ENCODE measurements at regions of chr3 and their contacts with region 1.

Region 1: DNA sequence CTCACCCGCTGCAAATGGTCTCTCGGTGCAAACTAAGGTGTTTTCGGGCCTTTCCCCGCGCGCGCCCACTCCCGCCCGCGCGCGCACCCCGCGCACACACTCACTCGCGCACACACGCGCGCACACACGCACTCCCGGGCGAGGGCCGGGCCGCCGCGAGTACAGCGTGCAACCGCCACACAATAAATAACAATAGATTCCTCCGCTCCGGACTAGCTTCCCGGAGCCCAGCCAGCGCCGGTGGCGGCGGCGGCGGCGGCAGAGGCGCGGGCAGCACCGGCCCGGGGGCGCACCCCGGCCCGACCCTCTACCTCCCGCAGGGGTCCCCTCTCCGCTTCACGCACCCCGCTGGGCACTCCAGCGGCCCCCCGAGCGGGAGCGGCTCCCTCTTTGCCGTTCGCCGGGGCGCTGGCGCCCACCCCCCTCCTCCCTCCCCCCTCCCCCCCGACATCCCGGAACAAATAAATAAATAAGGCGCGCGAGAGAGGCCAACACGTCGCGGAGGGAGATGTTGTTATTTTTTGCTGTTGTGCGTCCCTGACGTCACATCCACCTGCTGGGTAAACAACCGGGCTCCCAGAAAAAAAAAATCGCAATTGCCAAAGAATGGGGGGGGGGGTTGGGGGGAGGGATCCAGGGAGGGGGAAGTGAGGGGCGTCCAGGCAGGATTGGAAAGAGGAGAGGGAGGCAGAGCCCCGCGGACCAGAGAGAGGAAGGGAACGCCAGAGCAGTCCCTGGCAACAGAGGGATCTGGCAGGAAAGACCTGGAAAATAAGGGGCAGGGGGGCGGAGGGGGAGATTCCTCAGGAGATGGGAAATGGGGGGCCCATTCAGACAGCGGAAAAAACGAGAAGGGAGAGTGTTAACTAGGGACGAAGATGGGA is at the start of gene FOXP1:
- DNase-seq: peak; percentile 62 to 80 (median 72)
- ATAC-seq: peak; percentile 77
- H3K4me3 ChIP-seq: peak within 1 kb of the TSS; percentile 76
- H3K4me3 Mint-ChIP-seq: peak within 1 kb of the TSS; percentile 94 to 99 (median 98)
- H3K27ac ChIP-seq: peak within 1 kb of the TSS; percentile 85
- H3K27ac Mint-ChIP-seq: peak within 1 kb of the TSS; percentile 94 to 99 (median 98)
- H3K4me1 ChIP-seq: peaks cover 7 to 16% of the 10 kb centered on the region in 2 donors
- H3K4me1 Mint-ChIP-seq: peaks cover 12 to 44% (median 33%) of the 10 kb centered on the region in 7 donors
- H3K27me3 ChIP-seq: no peaks in the 10 kb centered on the region
- H3K27me3 Mint-ChIP-seq: peaks cover 0 to 38% (median 0%) of the 10 kb centered on the region in 5 donors
- total RNA-seq, gene FOXP1: 104 to 537 (median 456) TPM

Region 2: DNA sequence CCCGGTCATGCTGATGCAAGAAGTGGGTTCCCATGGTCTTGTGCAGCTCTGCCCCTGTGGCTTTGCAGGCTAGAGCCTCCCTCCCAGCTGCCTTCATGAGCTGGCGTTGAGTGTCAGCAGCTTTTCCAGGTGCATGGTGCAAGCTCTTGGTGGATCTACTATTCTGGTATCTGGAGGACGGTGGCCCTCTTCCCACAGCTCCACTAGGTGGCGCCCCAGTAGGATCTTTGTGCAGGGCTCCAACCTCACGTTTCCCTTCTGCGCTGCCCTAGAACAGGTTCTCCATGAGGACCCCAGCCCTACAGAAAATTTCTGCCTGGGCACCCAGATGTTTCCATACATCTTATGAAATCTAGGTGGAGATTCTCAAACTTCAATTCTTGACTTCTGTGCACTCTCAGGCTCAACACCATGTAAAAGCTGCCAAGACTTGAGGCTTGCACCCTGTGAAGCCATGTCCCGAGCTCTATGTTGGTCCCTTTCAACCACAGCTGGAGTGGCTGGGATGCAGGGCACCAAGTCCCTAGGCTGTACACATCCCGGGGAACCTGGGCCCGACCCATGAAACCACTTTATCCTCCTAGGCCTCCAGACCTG is 1033.0 kb before region 1 on chr3:
- CTCF ChIA-PET with region 1: interaction called, 46 read pairs
- POLR2A ChIA-PET with region 1: interaction called, 3 read pairs
- intact Hi-C with region 1: loop called (anchors 1 kb)
- DNase-seq: peak; percentile 44 to 79 (median 69)
- ATAC-seq: peak; percentile 84
- H3K4me3 ChIP-seq: no peak overlapping the region
- H3K4me3 Mint-ChIP-seq: no peak overlapping the region
- H3K27ac ChIP-seq: no peak overlapping the region
- H3K27ac Mint-ChIP-seq: no peak overlapping the region
- H3K4me1 ChIP-seq: no peaks in the 10 kb centered on the region
- H3K4me1 Mint-ChIP-seq: peaks cover 0 to 1% (median 0%) of the 10 kb centered on the region in 7 donors
- H3K27me3 ChIP-seq: no peaks in the 10 kb centered on the region
- H3K27me3 Mint-ChIP-seq: peaks cover 0 to 13% (median 0%) of the 10 kb centered on the region in 5 donors

Region 3: DNA sequence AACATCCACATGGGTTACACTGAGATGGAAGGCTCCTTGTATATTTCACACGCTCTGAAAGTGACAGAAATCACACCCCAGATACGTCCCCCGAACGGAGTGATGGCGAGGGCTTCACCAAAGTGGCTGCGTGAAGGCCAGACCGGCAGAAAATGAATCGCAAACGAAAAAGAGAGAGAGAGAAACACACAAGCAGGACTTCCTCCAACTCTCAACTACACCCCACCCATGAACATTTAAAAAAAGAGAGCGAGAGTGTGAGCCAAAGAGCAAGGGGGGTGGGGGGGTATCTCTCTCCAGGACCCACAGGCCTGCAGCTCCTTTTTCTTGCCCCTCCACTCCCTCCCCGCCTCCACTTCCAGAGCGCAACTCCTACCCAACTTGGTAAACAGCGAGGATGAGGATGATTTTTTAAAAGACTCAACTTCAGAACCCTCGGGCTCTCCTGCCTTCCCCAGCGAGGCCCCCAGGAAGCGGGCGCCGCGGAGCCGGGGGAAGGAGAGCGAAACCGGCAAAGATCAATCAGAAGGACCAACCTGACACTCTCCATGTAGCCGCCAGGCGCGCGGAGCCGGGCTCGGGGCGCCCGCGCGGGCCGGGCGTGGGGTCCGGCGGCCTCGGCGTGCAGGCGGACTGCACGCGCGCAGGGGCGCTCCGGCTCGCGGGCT is 519.4 kb before region 1 on chr3:
- CTCF ChIA-PET with region 1: interaction called, 3 read pairs
- POLR2A ChIA-PET with region 1: interaction called, 6 read pairs
- intact Hi-C with region 1: loop called (anchors 1 kb)
- DNase-seq: peak in 8 of 9 donors; percentile 35 to 86 (median 84)
- ATAC-seq: peak; percentile 64
- H3K4me3 ChIP-seq: peak overlapping the region; percentile 74
- H3K4me3 Mint-ChIP-seq: no peak overlapping the region
- H3K27ac ChIP-seq: peak overlapping the region; percentile 82
- H3K27ac Mint-ChIP-seq: no peak overlapping the region
- H3K4me1 ChIP-seq: peaks cover 55 to 64% of the 10 kb centered on the region in 2 donors
- H3K4me1 Mint-ChIP-seq: peaks cover 47 to 69% (median 67%) of the 10 kb centered on the region in 7 donors
- H3K27me3 ChIP-seq: no peaks in the 10 kb centered on the region
- H3K27me3 Mint-ChIP-seq: no peaks in the 10 kb centered on the region

Region 4: DNA sequence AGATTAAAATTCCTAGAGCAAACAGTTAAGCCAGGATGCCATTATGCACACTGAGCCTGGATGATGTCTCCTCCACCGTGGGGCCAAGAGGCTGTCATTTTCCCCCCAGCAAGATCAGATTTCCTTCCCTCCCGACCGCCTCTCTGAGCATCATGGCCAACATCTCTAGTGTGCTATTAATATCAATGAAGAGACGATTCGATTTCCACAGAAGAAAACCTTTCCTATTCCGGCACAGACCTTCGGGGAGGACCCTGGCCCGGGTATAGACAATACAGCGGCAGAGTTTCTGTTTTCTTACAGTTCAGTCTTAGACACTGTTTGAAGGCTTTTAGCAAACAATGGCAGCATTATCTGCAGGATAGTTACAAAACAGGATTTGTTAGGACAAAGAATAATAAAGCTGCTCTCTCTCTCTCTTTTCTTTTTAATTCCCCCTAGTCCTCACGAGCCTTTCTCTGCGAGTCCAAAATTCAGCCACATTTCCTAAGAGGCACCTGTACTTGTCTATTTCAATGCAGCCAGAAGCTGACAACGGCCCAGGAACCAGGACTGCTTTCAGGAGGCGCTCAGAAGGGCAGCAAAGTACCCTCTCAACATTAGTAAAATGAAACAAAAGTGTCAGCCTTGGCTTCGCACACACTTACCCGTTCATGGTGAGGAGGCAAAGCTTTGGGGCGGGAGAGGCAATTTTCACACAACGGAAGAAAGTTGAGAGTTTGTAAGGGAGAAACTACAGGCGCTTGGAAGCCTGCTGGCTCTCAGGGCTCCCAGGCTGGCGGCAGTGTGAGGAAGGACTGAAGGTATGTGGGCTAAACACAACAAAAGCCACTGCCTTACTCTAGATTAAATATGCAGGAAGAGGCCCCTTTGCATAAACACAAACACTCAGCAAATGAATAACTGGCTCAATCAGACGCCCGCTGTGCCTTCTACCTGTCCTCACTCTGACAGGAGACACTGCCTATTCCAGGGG is 278.3 kb before region 1 on chr3:
- CTCF ChIA-PET with region 1: interaction called, 3 read pairs
- POLR2A ChIA-PET with region 1: interaction called, 3 read pairs
- intact Hi-C with region 1: loop called (anchors 2 to 5 kb)
- DNase-seq: peak in 8 of 9 donors; percentile 23 to 46 (median 30)
- ATAC-seq: peak; percentile 51
- H3K4me3 ChIP-seq: peak overlapping the region; percentile 73
- H3K4me3 Mint-ChIP-seq: peak overlapping the region; percentile 84 to 98 (median 95)
- H3K27ac ChIP-seq: peak overlapping the region; percentile 90
- H3K27ac Mint-ChIP-seq: peak overlapping the region in 8 of 9 donors; percentile 68 to 99 (median 98)
- H3K4me1 ChIP-seq: peaks cover 12 to 63% of the 10 kb centered on the region in 2 donors
- H3K4me1 Mint-ChIP-seq: peaks cover 46 to 90% (median 74%) of the 10 kb centered on the region in 7 donors
- H3K27me3 ChIP-seq: no peaks in the 10 kb centered on the region
- H3K27me3 Mint-ChIP-seq: peaks cover 0 to 67% (median 0%) of the 10 kb centered on the region in 5 donors

Region 5: DNA sequence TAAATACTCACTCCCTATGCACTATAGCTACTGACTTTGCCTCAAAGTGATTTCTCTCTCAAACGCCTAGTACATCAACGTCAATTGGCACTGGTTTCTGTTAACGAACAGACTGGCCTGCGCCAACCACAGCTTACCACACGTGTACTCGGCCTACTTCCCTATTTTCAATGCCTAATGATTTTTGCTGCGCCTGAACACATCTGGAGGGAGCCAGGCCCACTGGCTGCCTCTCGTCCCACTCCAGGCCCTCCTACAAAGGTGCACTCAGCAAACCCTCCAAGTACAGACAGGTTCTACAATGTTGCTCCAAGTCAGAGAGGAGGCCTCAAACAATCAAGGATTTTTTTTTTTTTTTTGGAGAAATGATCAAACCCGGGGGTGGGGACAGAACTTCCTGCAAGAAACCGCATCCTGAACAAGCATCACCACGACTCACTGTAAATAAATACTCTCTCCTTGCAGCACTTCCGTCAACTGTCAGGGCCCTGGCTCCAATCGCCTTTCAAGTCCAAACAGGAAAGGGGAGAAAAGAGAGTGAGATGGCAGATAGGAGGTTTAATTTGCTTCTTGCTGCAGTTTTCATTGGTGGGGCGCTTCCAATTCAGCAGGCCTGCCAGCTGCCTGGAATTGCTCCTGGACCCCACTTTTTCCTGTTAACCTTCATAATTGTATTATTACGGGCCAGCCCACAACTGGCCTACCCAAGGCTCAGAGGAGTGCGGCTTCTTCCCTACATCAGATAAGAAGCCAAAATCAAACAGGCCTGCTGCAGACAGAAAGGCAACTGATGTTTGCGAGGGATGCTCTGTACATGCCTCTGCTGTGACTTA is 139.6 kb before region 1 on chr3:
- CTCF ChIA-PET with region 1: interaction called, 4 read pairs
- POLR2A ChIA-PET with region 1: no interaction called
- intact Hi-C with region 1: loop called (anchors 1 kb)
- DNase-seq: peak; percentile 57 to 97 (median 94)
- ATAC-seq: peak; percentile 88
- H3K4me3 ChIP-seq: peak overlapping the region; percentile 12
- H3K4me3 Mint-ChIP-seq: peak overlapping the region; percentile 64 to 86 (median 77)
- H3K27ac ChIP-seq: peak overlapping the region; percentile 90
- H3K27ac Mint-ChIP-seq: peak overlapping the region; percentile 94 to 100 (median 99)
- H3K4me1 ChIP-seq: peaks cover 93 to 96% of the 10 kb centered on the region in 2 donors
- H3K4me1 Mint-ChIP-seq: peaks cover 70 to 100% (median 96%) of the 10 kb centered on the region in 7 donors
- H3K27me3 ChIP-seq: no peaks in the 10 kb centered on the region
- H3K27me3 Mint-ChIP-seq: peaks cover 0 to 2% (median 0%) of the 10 kb centered on the region in 5 donors

Region 6: DNA sequence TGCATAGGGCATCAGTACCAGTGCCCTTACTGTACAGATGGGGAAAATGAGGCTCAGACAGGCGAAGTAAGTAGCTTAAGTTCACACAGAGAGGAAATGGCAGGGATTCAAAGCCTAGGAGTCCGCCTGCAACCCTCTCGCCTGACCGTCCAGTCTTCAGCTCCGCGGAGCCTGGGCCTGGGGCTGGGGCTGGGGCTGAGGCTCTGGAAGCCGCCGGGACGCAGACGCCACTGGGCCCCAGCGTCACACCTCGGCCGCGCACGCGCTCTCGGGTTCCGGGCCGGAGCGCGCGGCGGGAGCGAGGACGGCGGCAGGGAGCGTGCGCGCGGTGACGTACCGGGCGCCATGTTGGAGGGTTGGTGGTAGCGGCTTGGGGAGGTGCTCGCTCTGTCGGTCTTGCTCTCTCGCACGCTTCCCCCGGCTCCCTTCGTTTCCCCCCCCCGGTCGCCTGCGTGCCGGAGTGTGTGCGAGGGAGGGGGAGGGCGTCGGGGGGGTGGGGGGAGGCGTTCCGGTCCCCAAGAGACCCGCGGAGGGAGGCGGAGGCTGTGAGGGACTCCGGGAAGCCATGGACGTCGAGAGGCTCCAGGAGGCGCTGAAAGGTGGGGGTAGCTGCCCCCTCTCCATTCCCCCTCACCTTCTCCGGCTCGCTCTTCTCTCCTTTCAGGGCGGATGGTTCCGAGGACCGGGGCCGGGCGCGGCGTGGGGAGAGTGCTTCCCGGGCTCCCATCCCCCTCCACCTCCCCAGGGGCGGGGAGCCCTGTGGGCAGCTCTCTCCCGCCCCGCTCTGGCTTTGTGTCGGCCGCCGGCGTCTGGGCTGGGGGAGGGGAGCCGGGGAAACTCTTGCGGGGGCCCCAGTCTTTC is 1412.9 kb after region 1 on chr3 and contains the start of gene PPP4R2:
- CTCF ChIA-PET with region 1: no interaction called
- POLR2A ChIA-PET with region 1: no interaction called
- intact Hi-C with region 1: loop called in 1 of 2 experiments (anchors 5 kb)
- DNase-seq: peak; percentile 90 to 96 (median 94)
- ATAC-seq: peak; percentile 94
- H3K4me3 ChIP-seq: peak within 1 kb of the TSS; percentile 76
- H3K4me3 Mint-ChIP-seq: peak within 1 kb of the TSS; percentile 84 to 95 (median 92)
- H3K27ac ChIP-seq: peak within 1 kb of the TSS; percentile 97
- H3K27ac Mint-ChIP-seq: peak within 1 kb of the TSS; percentile 69 to 97 (median 88)
- H3K4me1 ChIP-seq: peaks cover 26 to 36% of the 10 kb centered on the region in 2 donors
- H3K4me1 Mint-ChIP-seq: peaks cover 30 to 51% (median 44%) of the 10 kb centered on the region in 7 donors
- H3K27me3 ChIP-seq: no peaks in the 10 kb centered on the region
- H3K27me3 Mint-ChIP-seq: no peaks in the 10 kb centered on the region
- total RNA-seq, gene PPP4R2: 56.3 to 87.0 (median 63.8) TPM

Measured in naive thymus-derived CD4-positive, alpha-beta T cell (primary cell).